ENCODE measurements at regions of chr6 and their contacts with region 1.

Region 1: GRCh38 chr6:90411292-90411781 is 114.7 kb upstream of the BACH2 start:
- DNase-seq: peak in 26 of 35 experiments; percentile 18 to 73 (median 39)
- ATAC-seq: peak; percentile 59 to 79 (median 67)
- H3K4me3 ChIP-seq: no peak overlapping the region
- H3K4me3 Mint-ChIP-seq: peak overlapping the region in 1 of 3 donors; percentile 38
- H3K27ac ChIP-seq: peak overlapping the region; percentile 57
- H3K27ac Mint-ChIP-seq: peak overlapping the region; percentile 80 to 82
- H3K4me1 ChIP-seq: peaks cover 10 to 40% of the 10 kb centered on the region in 2 experiments
- H3K4me1 Mint-ChIP-seq: peaks cover 34 to 53% (median 49%) of the 10 kb centered on the region in 3 donors
- H3K27me3 ChIP-seq: no peaks in the 10 kb centered on the region
- H3K27me3 Mint-ChIP-seq: peaks cover 0 to 2% of the 10 kb centered on the region in 2 donors

Region 2: GRCh38 chr6:89729818-89730217 is 681.5 kb before region 1 on chr6:
- CTCF ChIA-PET with region 1: no interaction called
- POLR2A ChIA-PET with region 1: no interaction called
- DNase-seq: no peak
- ATAC-seq: no peak
- H3K4me3 ChIP-seq: no peak overlapping the region
- H3K4me3 Mint-ChIP-seq: no peak overlapping the region
- H3K27ac ChIP-seq: no peak overlapping the region
- H3K27ac Mint-ChIP-seq: peak overlapping the region in 1 of 2 donors; percentile 12
- H3K4me1 ChIP-seq: no peaks in the 10 kb centered on the region
- H3K4me1 Mint-ChIP-seq: no peaks in the 10 kb centered on the region
- H3K27me3 ChIP-seq: no peaks in the 10 kb centered on the region
- H3K27me3 Mint-ChIP-seq: no peaks in the 10 kb centered on the region

Region 3: DNA sequence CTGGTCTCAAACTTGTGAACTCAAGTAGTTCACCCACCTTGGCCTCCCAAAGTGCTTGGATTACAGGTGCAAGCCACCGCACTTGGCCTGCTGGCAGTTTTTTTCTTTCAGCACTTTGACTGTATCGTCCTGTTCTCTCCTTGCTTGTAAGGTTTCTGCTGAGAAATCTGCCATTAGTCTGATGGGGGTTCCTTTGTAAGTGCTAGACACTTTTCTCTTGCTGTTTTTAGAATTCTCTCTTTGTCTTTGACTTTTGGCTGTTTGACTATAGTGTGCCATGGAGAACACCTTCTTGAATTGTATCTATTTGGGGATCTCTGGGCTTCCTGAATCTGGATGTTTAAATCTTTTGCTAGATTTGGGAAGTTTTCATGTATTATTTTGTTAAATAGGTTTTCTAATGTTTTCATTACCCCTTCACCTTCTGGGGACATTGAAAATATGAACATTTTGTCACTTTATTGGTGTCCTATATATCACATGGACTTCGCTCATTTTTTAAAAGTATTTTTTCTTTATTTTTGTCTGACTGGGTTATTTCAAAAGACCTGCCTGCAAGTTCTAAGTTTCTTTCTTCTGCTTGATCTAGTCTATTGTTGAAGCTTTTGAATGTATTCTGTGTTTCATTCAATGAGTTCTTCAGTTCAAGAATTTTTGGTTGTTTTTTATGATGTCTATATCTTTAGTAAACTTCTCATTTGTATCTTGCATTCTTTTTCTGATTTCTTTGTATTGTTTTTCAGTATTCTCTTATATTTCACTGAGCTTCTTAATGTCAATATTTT is 495.0 kb before region 1 on chr6:
- CTCF ChIA-PET with region 1: no interaction called
- POLR2A ChIA-PET with region 1: interaction called in 1 of 2 experiments, 10 read pairs
- DNase-seq: no peak
- ATAC-seq: no peak
- H3K4me3 ChIP-seq: no peak overlapping the region
- H3K4me3 Mint-ChIP-seq: no peak overlapping the region
- H3K27ac ChIP-seq: no peak overlapping the region
- H3K27ac Mint-ChIP-seq: no peak overlapping the region
- H3K4me1 ChIP-seq: no peaks in the 10 kb centered on the region
- H3K4me1 Mint-ChIP-seq: peaks cover 0 to 3% (median 1%) of the 10 kb centered on the region in 3 donors
- H3K27me3 ChIP-seq: peaks cover 0 to 21% of the 10 kb centered on the region in 2 experiments
- H3K27me3 Mint-ChIP-seq: peaks cover 0 to 4% of the 10 kb centered on the region in 2 donors

Region 4: DNA sequence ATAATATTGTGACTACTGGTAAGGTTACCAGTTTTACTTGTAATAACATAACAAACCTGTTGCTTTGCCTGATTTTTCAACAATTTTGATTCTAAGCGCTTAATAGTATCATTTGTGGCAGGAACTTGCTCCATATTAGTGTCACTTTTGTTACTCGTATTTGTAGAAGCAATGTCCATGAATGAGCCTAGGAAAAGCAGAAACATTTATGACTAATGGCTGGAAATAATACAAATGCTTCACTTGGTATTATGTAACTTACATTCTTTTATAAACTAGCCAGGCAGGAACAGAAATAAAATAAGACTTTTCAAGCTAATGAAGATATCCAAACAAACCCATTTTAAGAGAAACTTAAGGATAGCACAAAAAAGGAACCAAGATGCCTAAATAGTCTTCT is 136.7 kb after region 1 on chr6:
- CTCF ChIA-PET with region 1: no interaction called
- POLR2A ChIA-PET with region 1: no interaction called
- DNase-seq: no peak
- ATAC-seq: no peak
- H3K4me3 ChIP-seq: no peak overlapping the region
- H3K4me3 Mint-ChIP-seq: no peak overlapping the region
- H3K27ac ChIP-seq: no peak overlapping the region
- H3K27ac Mint-ChIP-seq: no peak overlapping the region
- H3K4me1 ChIP-seq: no peaks in the 10 kb centered on the region
- H3K4me1 Mint-ChIP-seq: peaks cover 0 to 4% (median 0%) of the 10 kb centered on the region in 3 donors
- H3K27me3 ChIP-seq: no peaks in the 10 kb centered on the region
- H3K27me3 Mint-ChIP-seq: no peaks in the 10 kb centered on the region